ENCODE measurements at regions of chr3 and their contacts with region 1.

Region 1: GRCh38 chr3:129627429-129628168 is 21.1 kb upstream of the PLXND1 start:
- DNase-seq: peak; percentile 55 to 82 (median 76)
- H3K4me3 ChIP-seq: peak overlapping the region; percentile 46 to 85 (median 71)
- H3K27ac ChIP-seq: peak overlapping the region; percentile 63 to 98 (median 93)
- H3K27me3 ChIP-seq: no peaks in the 10 kb centered on the region
- CTCF ChIP-seq: peak; percentile 50 to 92 (median 85)

Region 2: DNA sequence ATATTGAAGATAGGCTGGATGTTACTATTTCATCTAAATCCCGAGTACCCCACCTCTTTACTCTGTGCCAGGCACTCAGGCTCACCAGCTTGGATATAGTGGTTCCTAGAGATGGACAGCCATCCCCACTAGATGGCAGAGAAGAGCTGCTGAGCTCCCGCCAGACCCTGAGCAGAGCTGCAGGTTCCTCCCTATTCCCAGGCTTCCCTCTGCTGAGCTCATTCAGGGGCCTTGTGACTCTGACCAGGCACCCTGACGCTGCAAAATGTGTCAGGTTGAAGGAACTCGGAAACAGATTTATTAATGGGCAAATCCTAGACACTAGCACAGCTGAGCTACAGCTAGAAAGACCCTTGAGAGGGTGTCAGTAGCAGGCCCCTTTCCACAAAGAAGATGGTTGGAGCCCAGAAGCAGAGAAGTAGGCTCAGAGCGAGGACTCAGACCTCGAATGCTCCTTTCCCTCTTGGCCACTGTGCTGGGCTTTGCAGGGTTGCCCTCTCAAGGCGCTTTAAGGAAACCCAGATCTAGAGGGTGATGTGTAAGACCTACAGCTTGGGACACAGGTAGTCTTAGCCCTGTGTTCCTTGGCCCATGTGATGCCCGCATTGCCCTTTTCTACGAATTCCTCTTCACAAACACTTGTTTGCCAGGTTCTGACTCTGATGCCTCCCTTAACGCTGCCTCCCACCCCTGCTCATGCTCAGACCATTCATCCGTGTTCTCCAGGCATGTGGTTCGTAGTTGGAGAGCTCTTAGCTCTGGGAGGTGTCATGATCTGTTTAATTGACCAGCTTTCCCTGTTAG is 137.2 kb before region 1 on chr3:
- intact Hi-C with region 1: loop called (anchors 1 to 5 kb)
- DNase-seq: peak; percentile 66 to 94 (median 88)
- H3K4me3 ChIP-seq: peak overlapping the region in 23 of 59 donors; percentile 1 to 38 (median 22)
- H3K27ac ChIP-seq: peak overlapping the region; percentile 23 to 97 (median 89)
- H3K27me3 ChIP-seq: no peaks in the 10 kb centered on the region
- CTCF ChIP-seq: peak; percentile 77 to 99 (median 94)

Region 3: DNA sequence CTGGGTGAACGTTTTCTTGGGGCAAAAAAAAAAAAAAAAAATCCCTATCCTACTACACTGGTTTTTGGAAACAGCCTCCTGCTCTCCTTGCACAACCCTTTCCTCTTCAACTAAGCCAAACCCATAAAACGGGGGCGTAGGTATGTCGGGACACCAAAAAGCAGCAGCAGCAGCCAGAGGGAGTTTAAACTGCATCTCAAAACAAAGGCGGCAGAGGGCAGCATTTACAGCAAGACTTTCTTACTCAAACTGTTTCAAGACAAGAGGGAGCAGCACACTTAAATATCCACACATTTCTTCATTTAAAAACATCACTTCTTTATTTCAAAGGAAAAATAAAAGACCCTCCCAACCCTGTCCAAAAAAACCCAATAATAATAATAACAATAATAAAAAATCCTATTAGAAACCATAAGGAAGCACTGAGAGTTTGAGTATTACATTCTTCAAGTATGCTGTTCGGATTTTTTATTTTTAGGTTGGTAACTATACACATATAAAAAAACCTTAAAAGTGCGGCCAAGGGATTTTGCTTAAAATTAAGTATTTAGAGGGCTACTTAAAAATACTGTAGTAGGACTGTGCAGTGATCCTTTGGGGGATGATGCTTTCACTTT is 22.8 kb after region 1 on chr3:
- intact Hi-C with region 1: loop called in 1 of 2 experiments (anchors 2 kb)
- DNase-seq: peak in 9 of 10 donors; percentile 53 to 89 (median 63)
- H3K4me3 ChIP-seq: no peak overlapping the region
- H3K27ac ChIP-seq: peak overlapping the region in 16 of 59 donors; percentile 0 to 76 (median 50)
- H3K27me3 ChIP-seq: no peaks in the 10 kb centered on the region
- CTCF ChIP-seq: peak; percentile 27 to 95 (median 83)

Region 4: DNA sequence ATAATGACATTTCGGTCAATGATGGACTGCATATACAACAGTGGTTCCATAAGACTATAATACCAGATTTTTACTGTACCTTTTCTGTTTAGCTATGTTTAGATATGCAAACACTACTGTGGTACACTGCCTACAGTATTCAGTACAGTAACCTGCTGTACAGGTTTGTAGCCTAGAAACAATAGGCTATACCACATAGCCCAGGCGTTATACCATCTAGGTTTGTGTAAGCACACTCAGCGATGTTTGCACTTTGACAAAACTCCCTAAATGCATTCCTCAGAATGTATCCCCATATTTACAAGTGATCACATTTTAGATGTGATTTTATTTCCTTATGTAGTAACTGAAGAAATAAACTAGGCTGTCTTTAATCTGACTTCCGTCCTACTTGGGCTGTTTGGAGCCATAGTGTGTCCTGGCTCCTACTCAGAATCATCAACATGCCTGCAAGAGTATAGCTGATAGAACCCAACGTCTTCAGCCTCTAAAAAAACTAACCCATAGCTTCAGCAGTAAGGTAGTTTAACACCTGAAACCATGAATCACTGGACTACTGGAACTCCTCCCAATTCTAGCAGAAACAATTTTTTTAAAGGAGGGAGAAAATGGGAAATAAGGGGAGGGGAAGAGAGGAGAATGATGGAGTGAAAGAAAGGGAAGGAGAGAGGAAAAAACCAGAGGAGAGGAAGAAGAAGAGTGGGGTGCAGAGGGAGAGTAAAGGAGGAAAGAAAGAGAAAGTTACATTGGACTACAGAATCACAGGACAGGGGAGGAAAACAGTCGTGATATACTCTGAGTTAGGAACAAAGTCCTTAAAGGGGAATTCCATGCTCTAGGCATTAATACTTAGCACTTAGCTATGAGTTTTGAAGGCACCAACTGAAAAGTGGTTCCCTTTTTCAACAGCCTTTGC is 46.5 kb after region 1 on chr3:
- intact Hi-C with region 1: no loop called
- DNase-seq: no peak
- H3K4me3 ChIP-seq: no peak overlapping the region
- H3K27ac ChIP-seq: no peak overlapping the region
- H3K27me3 ChIP-seq: no peaks in the 10 kb centered on the region
- CTCF ChIP-seq: no peak

Region 5: GRCh38 chr3:129702934-129703712 is 75.5 kb after region 1 on chr3:
- intact Hi-C with region 1: no loop called
- DNase-seq: no peak
- H3K4me3 ChIP-seq: no peak overlapping the region
- H3K27ac ChIP-seq: peak overlapping the region in 3 of 59 donors; percentile 9 to 16 (median 11)
- H3K27me3 ChIP-seq: no peaks in the 10 kb centered on the region
- CTCF ChIP-seq: no peak

Region 6: DNA sequence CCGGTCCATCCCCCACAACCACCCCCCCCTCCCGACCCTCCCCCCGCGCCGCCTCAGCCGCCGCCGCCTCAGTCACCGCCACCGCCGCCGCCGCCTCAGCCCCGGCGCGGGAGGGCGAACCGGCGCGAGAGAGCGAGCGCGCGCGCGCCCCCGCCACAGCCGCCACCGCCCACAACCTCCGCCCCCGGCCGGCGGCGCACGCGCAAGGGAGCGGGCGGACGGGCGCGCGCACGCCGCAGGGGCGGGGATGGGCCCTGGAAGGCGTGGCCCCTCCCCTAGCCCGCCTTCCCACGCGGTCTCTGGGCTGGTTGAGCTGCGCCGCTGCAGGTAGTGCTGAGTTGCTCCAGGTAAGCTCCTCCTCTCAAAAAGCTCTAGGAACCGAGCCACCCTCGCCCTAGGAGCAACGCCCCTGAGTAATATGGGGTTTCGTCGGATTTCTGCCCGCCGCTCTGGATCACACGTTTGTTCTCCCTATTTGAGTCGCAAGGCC is 266.0 kb after region 1 on chr3 and contains the start of gene TMCC1:
- intact Hi-C with region 1: loop called in 1 of 2 experiments (anchors 5 kb)
- DNase-seq: peak; percentile 61 to 90 (median 81)
- H3K4me3 ChIP-seq: peak within 1 kb of the TSS; percentile 65 to 99 (median 89)
- H3K27ac ChIP-seq: peak within 1 kb of the TSS; percentile 63 to 96 (median 92)
- H3K27me3 ChIP-seq: no peaks in the 10 kb centered on the region
- CTCF ChIP-seq: peak in 5 of 56 donors; percentile 2 to 25 (median 12)
- total RNA-seq, gene TMCC1: 64.8 to 161 (median 84.3) TPM

Region 7: GRCh38 chr3:130093741-130094391 is 466.3 kb after region 1 on chr3:
- intact Hi-C with region 1: loop called in 1 of 2 experiments (anchors 5 kb)
- DNase-seq: no peak
- H3K4me3 ChIP-seq: no peak overlapping the region
- H3K27ac ChIP-seq: no peak overlapping the region
- H3K27me3 ChIP-seq: no peaks in the 10 kb centered on the region
- CTCF ChIP-seq: no peak